Motor neuron (in vitro differentiated cells): ENCODE measurements at regions of chr2 and their contacts with region 1.

Region 1: DNA sequence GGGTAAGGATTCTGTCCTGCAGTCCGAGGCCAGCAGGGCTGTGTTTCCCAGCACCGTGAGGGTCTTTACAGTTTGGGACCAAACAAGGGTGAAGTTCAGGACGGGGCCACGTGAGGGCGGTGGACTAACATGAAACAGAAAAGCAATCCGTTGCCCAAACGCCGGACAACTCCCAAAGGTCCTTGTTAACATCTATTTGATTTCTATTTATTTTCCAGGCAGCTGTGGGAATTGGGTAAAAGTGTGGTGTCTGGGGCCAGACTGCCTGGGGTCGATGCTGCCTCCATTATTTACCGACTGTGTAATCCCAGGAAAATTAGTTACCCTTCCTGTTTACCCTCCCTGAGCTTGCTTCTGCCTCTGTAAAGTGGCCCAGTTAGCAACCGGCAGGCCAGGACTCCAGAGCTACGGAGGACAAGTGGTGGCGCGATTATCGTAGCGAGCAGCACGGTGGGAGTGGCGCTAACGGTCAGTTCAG is 66.3 kb upstream of the TCF7L1 start:
- ATAC-seq: peak; percentile 84 to 92 (median 91)
- H3K4me3 ChIP-seq: peak overlapping the region; percentile 4 to 23 (median 8)
- H3K27ac ChIP-seq: no peak overlapping the region
- H3K4me1 ChIP-seq: peaks cover 0 to 5% of the 10 kb centered on the region in 2 donors

Region 2: GRCh38 chr2:85288244-85288725 is 221.4 kb after region 1 on chr2:
- in situ Hi-C with region 1: loop called in 4 of 9 experiments (anchors 10 to 25 kb)
- ATAC-seq: peak in 2 of 8 experiments; percentile 64 to 78
- H3K4me3 ChIP-seq: no peak overlapping the region
- H3K27ac ChIP-seq: no peak overlapping the region
- H3K4me1 ChIP-seq: peaks cover 2 to 3% of the 10 kb centered on the region in 2 donors

Region 3: DNA sequence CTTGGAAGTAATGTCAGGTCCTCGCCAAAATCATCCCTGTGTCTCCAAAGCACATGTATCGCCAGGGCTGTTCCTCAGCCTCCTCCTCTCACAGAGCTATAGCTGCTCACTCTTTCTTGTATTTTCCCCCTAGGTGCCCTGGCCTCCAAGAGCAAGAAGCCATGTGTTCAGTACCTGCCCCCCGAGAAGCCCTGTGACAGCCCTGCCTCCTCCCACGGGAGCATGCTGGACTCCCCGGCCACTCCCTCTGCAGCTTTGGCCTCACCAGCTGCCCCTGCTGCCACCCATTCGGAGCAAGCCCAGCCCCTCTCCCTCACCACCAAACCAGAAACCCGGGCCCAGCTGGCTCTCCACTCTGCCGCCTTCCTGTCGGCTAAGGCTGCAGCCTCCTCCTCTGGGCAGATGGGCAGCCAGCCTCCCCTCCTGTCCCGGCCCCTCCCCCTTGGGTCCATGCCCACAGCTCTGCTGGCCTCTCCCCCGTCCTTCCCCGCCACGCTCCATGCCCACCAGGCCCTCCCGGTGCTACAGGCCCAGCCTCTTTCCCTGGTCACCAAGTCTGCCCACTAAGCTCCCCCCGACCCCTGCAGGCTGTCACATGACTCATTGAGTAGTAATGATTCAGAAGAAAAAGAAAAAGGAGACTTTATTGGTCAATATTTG is 242.1 kb after region 1 on chr2:
- in situ Hi-C with region 1: loop called in 2 of 9 experiments (anchors 5 to 10 kb)
- ATAC-seq: peak; percentile 39 to 91 (median 70)
- H3K4me3 ChIP-seq: no peak overlapping the region
- H3K27ac ChIP-seq: no peak overlapping the region
- H3K4me1 ChIP-seq: peaks cover 3 to 10% of the 10 kb centered on the region in 2 donors